Posterior cingulate gyrus (tissue), 11 donors: ENCODE measurements at regions of chr5 and their contacts with region 1.

Region 1: GRCh38 chr5:113294311-113295110 is 140.3 kb downstream of the TSSK1B start:
- DNase-seq: peak; percentile 63 to 97 (median 82)

Region 2: GRCh38 chr5:112289465-112289864 is 1005.0 kb before region 1 on chr5:
- intact Hi-C with region 1: no loop called
- DNase-seq: no peak

Region 3: DNA sequence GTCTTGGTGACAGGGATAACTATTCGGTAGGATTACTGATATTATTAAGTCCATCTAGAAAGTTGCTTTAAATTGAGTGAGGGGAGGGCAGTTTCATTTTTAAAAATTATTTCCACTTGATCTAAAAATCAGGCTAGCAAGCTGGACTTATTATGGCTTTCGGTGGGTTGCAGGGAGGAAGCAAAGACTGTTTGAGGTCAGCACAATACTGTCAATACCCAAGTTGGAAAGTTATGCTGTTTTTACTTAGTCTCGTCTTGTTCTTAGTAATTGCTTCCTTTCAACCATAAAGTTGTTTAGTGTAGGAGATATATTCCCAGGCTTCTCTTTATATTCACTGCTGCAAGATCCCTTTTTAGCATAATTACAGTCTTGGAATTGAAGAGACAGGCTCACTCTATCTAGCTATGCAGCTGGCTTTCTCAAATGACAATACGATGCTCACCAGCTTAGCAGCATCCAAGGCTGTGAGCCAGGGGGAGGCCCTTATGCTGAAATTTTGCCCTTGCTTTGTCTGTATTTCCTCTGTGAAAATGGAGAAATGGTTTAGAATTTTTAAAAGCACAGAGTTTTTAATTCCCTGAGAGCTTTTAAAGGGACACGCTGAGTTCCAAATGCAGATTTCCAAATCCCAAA is 625.1 kb before region 1 on chr5:
- intact Hi-C with region 1: no loop called
- DNase-seq: peak in 6 of 10 donors; percentile 14 to 82 (median 40)

Region 4: GRCh38 chr5:113212244-113212920 is 82.1 kb before region 1 on chr5:
- intact Hi-C with region 1: loop called (anchors 2 kb)
- DNase-seq: peak in 6 of 10 donors; percentile 20 to 82 (median 42)